Activated CD4-positive, alpha-beta T cell treated with anti-CD3 and anti-CD28 coated beads for 36 hours (primary cell): ENCODE measurements at regions of chr12 and their contacts with region 1.

Region 1: DNA sequence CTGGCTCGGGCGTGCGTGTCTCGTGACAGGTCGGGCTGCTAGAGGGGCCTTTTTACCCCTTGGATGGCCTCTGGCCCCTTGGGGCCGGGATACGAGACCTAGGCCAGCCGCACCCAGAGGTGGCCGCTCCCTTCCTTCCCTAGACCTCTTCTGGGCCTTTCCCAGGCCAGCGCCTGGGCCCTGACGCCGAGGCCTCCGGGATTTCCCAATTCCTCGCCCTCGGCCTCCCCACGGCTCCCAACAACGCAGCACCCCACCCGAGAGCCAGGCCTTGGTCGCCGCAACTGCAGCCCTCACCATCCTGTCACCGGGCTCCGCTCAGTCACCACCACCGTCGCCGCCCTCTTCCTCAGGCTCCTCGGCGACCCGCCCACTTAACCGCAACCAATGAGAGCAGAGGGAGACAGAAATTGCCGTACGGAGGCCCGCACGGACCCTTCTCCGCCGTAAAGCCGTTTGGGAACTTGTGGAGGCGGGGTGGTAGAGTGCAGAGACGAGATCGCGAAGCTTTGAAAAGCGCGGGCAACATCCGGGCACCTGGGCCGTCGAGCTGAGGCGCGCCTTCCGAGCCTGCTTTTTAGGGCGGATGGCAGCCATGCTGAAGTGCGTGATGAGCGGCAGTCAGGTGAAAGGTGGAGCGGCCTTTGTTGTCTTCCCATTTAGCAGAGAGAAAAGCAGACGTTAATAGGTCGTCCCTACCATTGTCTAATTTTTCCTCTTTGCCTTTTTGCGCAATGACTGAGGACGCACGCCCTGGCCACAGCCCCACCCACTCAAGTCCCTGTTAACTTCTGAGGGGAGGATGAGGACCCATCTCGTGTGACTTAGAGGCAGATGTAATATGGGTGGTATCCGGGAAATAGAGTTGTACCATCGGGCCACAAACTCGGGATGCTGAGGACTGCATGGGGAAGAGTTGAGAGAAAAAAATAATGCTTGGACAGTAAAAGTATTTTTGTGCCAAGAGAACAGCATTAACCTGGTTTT is at the starts of genes RAD9B and VPS29:
- DNase-seq: peak; percentile 100
- ATAC-seq: peak; percentile 97
- H3K4me3 Mint-ChIP-seq: peak within 1 kb of the TSS; percentile 95
- H3K27ac Mint-ChIP-seq: peak within 1 kb of the TSS; percentile 94
- H3K4me1 Mint-ChIP-seq: peaks cover 28% of the 10 kb centered on the region
- H3K27me3 Mint-ChIP-seq: no peaks in the 10 kb centered on the region
- total RNA-seq, gene RAD9B: 1.5 to 2.2 TPM
- total RNA-seq, gene VPS29: 84.4 to 103 TPM

Region 2: GRCh38 chr12:110079477-110080400 is 422.3 kb before region 1 on chr12:
- CTCF ChIA-PET with region 1: no interaction called
- POLR2A ChIA-PET with region 1: interaction called, 13 read pairs
- intact Hi-C with region 1: no loop called
- DNase-seq: peak; percentile 83
- ATAC-seq: peak; percentile 91
- H3K4me3 Mint-ChIP-seq: peak overlapping the region; percentile 57
- H3K27ac Mint-ChIP-seq: peak overlapping the region; percentile 94
- H3K4me1 Mint-ChIP-seq: peaks cover 30% of the 10 kb centered on the region
- H3K27me3 Mint-ChIP-seq: no peaks in the 10 kb centered on the region

Region 3: DNA sequence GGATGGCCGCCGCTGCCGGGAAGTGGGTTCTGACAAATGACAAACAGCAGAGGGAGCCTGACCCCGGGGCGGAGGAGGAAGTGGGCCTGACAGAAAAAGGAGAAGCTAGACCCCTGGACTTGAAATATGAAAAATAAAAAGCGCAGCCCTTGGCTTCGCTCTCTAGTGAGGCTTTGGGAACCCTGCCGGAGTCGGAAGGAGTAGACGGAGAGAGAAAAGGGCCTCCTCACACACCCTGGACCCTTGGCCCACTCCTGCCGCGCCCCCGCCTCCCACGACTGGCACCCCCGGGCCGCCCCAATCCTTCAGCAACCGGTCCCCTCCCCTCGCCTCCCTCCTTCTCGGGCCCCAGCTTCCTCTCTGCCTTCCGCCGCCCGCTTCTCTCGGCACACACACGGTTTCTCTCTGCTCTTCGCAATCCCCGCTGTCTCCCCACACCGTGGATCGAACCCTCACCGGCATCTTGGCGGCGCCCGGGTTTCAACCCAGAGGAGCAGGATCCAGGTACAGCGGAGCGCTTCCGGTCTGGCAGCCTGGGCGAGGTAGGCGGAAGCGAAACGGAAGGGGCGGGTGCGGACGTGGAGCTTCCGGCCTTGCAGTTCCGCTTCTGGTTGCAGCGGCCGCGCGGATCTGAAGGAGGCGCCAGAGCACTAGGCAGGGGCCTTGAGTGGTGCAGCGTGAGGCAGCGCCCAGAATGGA is 52.1 kb before region 1 on chr12 and contains the start of gene ARPC3:
- CTCF ChIA-PET with region 1: interaction called, 4 read pairs
- POLR2A ChIA-PET with region 1: interaction called, 11 read pairs
- intact Hi-C with region 1: loop called (anchors 1 kb)
- DNase-seq: peak; percentile 98
- ATAC-seq: peak; percentile 99
- H3K4me3 Mint-ChIP-seq: peak within 1 kb of the TSS; percentile 97
- H3K27ac Mint-ChIP-seq: peak within 1 kb of the TSS; percentile 100
- H3K4me1 Mint-ChIP-seq: peaks cover 38% of the 10 kb centered on the region
- H3K27me3 Mint-ChIP-seq: no peaks in the 10 kb centered on the region
- total RNA-seq, gene ARPC3: 244 to 422 TPM

Region 4: DNA sequence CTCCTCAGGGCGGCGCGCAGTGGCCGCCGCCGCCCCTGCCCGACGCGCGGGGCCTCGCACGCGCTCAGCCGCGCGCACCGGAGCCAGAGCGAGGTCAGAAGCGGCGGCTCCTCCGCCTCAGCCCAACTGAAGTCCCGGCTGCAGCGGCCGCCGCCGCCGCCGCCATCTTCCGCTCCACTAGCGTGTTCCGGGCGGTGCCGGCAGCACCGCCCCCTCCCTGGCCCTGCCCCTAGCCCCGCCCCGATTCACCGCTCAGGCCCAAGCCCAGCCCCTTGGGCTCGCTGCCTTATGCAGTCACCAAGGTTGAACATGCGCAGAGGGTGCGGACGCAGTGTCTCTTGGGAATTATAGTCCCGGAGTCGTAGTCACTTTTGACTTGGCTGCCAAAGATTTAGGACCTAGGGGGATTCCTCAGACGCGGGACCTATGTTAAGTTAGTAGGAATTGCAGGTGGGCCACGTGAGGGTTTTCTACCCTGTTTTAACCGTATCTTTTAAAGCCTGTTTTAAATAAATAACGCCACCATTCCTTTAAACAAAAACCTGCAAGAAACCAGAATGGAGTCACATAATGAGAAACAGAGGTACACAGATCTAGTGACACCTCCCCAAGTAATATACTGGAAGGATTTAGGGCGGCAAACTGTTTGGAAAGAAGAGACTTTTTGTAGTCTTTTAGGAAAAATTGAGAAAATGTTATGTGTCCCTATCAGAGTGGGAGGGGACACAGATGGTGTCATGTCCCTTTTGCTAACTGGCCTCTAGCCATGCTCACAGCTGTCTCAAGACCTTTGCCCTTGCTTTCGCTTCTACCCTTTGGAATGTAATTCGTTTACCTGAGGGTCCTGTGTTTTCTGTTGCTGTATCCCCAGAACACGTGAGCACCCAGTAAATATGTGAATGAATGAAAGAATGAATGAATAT is 81.4 kb after region 1 on chr12 and contains the start of gene PPTC7:
- CTCF ChIA-PET with region 1: interaction called, 3 read pairs
- POLR2A ChIA-PET with region 1: interaction called, 9 read pairs
- intact Hi-C with region 1: loop called in 1 of 2 experiments (anchors 1 kb)
- DNase-seq: peak; percentile 99
- ATAC-seq: peak; percentile 86
- H3K4me3 Mint-ChIP-seq: peak within 1 kb of the TSS; percentile 91
- H3K27ac Mint-ChIP-seq: peak within 1 kb of the TSS; percentile 99
- H3K4me1 Mint-ChIP-seq: peaks cover 59% of the 10 kb centered on the region
- H3K27me3 Mint-ChIP-seq: no peaks in the 10 kb centered on the region
- total RNA-seq, gene PPTC7: 33.4 to 36.5 TPM

Region 5: DNA sequence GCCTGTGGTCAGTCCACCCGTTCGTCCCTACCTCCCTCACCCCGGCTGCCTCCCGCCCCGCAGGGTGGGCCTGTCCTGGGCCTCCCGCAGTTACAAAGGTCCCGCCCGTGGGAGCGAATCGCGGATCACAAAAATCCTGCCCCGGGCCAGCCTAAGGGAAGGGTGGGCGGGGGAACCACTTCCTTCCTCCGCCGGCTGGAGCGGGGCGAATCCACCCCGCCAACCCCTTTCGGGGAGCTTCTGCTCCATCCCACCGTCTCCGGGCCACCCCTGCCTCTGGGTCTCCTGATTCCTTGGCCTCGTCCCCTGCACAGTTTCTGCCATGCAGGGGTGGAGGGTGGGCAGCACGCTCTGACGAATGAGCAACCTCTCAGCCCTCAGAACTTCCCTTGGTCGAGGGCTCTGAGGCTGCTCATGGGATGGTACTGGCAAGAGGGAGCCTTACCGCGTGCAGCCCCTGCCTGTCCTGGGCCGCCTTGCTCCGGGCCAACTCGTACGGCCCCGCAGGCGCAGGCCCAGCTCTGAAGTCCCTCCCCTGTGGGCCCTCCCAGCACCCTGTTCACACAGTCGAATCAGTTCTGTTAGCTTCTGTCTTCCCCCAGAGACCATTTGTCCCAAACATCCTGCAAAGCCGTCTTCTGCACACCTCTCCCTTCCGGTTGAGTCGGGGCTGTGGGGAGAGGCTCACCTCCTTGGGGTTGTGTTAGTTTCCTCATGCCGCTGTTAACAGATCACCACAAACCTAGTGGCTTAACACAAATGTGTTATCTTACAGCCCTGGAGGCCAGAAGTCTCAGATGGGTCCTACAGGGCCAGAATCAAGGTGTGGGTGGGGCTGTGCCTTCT is 187.5 kb after region 1 on chr12:
- CTCF ChIA-PET with region 1: interaction called, 3 read pairs
- POLR2A ChIA-PET with region 1: no interaction called
- intact Hi-C with region 1: loop called in 1 of 2 experiments (anchors 1 kb)
- DNase-seq: peak; percentile 64
- ATAC-seq: peak; percentile 78
- H3K4me3 Mint-ChIP-seq: peak overlapping the region; percentile 77
- H3K27ac Mint-ChIP-seq: peak overlapping the region; percentile 89
- H3K4me1 Mint-ChIP-seq: peaks cover 30% of the 10 kb centered on the region
- H3K27me3 Mint-ChIP-seq: no peaks in the 10 kb centered on the region

Region 6: DNA sequence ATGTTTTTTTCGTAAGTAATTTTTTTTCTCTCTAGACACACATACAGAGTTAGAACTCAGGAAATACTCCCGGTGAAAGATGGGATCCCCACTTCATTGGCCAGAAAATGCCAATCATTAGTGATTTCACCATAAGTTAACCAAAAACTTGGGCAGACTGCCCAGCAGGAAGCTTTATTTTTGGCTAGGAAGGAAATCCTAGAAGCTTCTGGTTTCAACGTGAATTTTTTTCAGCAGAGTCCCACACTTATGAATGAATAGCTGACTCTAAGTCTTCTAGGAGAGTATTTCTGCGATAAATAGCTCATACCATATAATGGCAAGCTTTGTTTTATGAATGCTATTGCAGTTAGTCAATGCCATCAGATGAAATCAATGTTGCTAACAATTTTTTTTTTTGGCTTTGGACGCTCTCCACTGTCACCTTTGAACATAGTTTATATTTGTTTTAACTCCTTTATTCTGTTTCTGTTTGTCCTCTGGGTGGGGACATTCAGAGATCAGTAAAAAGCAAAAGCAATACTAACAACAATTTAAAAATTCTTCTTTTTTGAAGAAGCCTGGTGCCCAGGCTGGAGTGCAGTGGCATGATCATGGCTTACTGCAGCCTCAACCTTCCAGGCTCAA is 231.2 kb after region 1 on chr12:
- CTCF ChIA-PET with region 1: no interaction called
- POLR2A ChIA-PET with region 1: no interaction called
- intact Hi-C with region 1: no loop called
- DNase-seq: no peak
- ATAC-seq: no peak
- H3K4me3 Mint-ChIP-seq: no peak overlapping the region
- H3K27ac Mint-ChIP-seq: peak overlapping the region; percentile 13
- H3K4me1 Mint-ChIP-seq: peaks cover 80% of the 10 kb centered on the region
- H3K27me3 Mint-ChIP-seq: no peaks in the 10 kb centered on the region